ENCODE measurements at regions of chr15 and their contacts with region 1.

Region 1: DNA sequence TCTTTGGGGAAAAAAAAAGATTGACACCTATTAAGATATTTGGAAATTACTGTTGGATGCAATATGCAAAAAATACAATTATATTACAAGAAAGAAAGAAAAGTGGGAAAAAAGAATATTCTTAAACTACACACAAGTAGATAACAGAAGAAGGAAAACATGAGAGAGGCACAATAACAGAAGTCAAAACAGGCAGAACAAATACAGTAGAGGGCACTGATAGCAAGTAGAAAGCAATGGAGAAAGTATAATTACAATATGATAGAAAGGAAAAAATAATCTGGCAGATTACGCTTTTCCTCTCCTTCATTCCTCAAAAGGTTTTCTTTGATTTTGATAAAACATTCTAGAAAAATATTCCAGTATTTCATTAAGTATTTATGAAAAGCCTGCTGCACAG is 72.1 kb downstream of the ADAM10 start:
- DNase-seq: no peak
- ATAC-seq: no peak
- H3K4me3 ChIP-seq: no peak overlapping the region
- H3K27ac ChIP-seq: no peak overlapping the region
- H3K4me1 ChIP-seq: no peaks in the 10 kb centered on the region
- H3K27me3 ChIP-seq: no peaks in the 10 kb centered on the region
- CTCF ChIP-seq: peak in 1 of 3 experiments; percentile 29; a peak in 1 of 6 replicates
- EP300 ChIP-seq: no peak
- POLR2A ChIP-seq: no peak
- RAD21 ChIP-seq: peak; percentile 47

Region 2: GRCh38 chr15:58715266-58715917 is 38.0 kb after region 1 on chr15:
- CTCF ChIA-PET with region 1: no interaction called
- POLR2A ChIA-PET with region 1: no interaction called
- RAD21 ChIA-PET with region 1: no interaction called
- SMC1A ChIA-PET with region 1: interaction called, 3 read pairs
- in situ Hi-C with region 1: no loop called
- intact Hi-C with region 1: loop called (anchors 1 kb)
- DNase-seq: no peak
- ATAC-seq: peak; percentile 75
- H3K4me3 ChIP-seq: no peak overlapping the region
- H3K27ac ChIP-seq: no peak overlapping the region; the same call in 1 of the 2 replicates
- H3K4me1 ChIP-seq: peaks cover 3% of the 10 kb centered on the region; the same call in 1 of the 2 replicates
- H3K27me3 ChIP-seq: no peaks in the 10 kb centered on the region
- CTCF ChIP-seq: no peak
- EP300 ChIP-seq: no peak
- POLR2A ChIP-seq: no peak
- RAD21 ChIP-seq: no peak

Measured in GM12878 (cell line).